CD4-positive, alpha-beta memory T cell (primary cell): ENCODE measurements at regions of chr3 and their contacts with region 1.

Region 1: GRCh38 chr3:186790261-186790981 is 7.0 kb downstream of the EIF4A2 start:
- DNase-seq: peak in 2 of 5 donors; percentile 8 to 23
- H3K4me3 ChIP-seq: no peak overlapping the region
- H3K4me3 Mint-ChIP-seq: no peak overlapping the region
- H3K27ac ChIP-seq: no peak overlapping the region
- H3K27ac Mint-ChIP-seq: peak overlapping the region; percentile 33 to 97 (median 72)
- H3K4me1 ChIP-seq: peaks cover 43% of the 10 kb centered on the region
- H3K4me1 Mint-ChIP-seq: peaks cover 35 to 45% (median 42%) of the 10 kb centered on the region in 4 donors
- H3K27me3 ChIP-seq: no peaks in the 10 kb centered on the region
- H3K27me3 Mint-ChIP-seq: no peaks in the 10 kb centered on the region

Region 2: DNA sequence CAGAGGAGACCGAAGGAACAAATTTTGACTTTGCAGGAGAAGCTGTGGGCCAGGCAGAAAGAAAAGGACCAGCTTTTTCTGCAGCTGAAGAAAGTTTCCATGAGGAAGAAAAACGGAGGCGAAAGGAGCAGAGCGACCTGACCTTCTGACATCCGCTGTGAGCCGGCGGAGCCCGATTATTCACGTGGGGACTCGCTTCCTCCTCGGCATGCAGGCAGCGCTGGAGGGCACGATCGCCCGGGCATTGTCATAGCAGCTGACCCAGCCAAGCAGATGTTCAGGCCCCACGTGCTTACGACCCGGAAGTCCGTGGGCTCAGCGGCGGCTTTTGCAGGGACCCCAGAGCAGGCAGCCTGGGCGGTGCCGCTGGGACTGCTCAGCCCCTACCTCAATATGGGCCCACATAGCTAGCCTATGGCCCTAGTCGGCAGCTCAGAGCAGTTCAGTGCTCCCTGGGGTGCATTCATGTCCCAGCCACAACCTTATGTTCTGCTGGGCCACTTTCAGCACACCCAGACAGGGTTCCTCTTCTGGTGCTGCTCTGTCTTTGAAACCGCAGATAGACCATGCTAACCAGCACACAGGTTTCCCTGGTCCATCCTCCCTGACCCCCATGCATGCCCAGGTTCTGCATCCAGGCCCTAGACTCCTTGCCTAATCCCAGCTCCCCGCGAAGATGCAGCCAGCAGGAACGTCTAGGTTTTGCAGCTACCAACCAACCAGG is 17.6 kb before region 1 on chr3:
- CTCF ChIA-PET with region 1: no interaction called
- POLR2A ChIA-PET with region 1: interaction called, 311 read pairs
- intact Hi-C with region 1: no loop called
- DNase-seq: peak; percentile 46 to 63 (median 49)
- H3K4me3 ChIP-seq: peak overlapping the region; percentile 37 to 72
- H3K4me3 Mint-ChIP-seq: peak overlapping the region; percentile 88 to 99 (median 96)
- H3K27ac ChIP-seq: peak overlapping the region; percentile 61
- H3K27ac Mint-ChIP-seq: peak overlapping the region; percentile 81 to 95 (median 95)
- H3K4me1 ChIP-seq: peaks cover 12% of the 10 kb centered on the region
- H3K4me1 Mint-ChIP-seq: peaks cover 0 to 18% (median 13%) of the 10 kb centered on the region in 4 donors
- H3K27me3 ChIP-seq: no peaks in the 10 kb centered on the region
- H3K27me3 Mint-ChIP-seq: no peaks in the 10 kb centered on the region

Region 3: GRCh38 chr3:186965141-186965879 is 174.9 kb after region 1 on chr3:
- CTCF ChIA-PET with region 1: no interaction called
- POLR2A ChIA-PET with region 1: no interaction called
- intact Hi-C with region 1: no loop called
- DNase-seq: no peak
- H3K4me3 ChIP-seq: no peak overlapping the region
- H3K4me3 Mint-ChIP-seq: no peak overlapping the region
- H3K27ac ChIP-seq: no peak overlapping the region
- H3K27ac Mint-ChIP-seq: peak overlapping the region in 6 of 7 donors; percentile 29 to 79 (median 54)
- H3K4me1 ChIP-seq: peaks cover 33% of the 10 kb centered on the region
- H3K4me1 Mint-ChIP-seq: peaks cover 37 to 77% (median 55%) of the 10 kb centered on the region in 4 donors
- H3K27me3 ChIP-seq: no peaks in the 10 kb centered on the region
- H3K27me3 Mint-ChIP-seq: no peaks in the 10 kb centered on the region

Region 4: GRCh38 chr3:187130346-187131066 is 340.1 kb after region 1 on chr3:
- CTCF ChIA-PET with region 1: no interaction called
- POLR2A ChIA-PET with region 1: no interaction called
- intact Hi-C with region 1: loop called (anchors 5 kb)
- DNase-seq: peak; percentile 74 to 86 (median 83)
- H3K4me3 ChIP-seq: peak overlapping the region in 1 of 2 donors; percentile 37
- H3K4me3 Mint-ChIP-seq: peak overlapping the region; percentile 22 to 82 (median 74)
- H3K27ac ChIP-seq: peak overlapping the region; percentile 74
- H3K27ac Mint-ChIP-seq: peak overlapping the region; percentile 93 to 99 (median 98)
- H3K4me1 ChIP-seq: peaks cover 26% of the 10 kb centered on the region
- H3K4me1 Mint-ChIP-seq: peaks cover 16 to 39% (median 27%) of the 10 kb centered on the region in 4 donors
- H3K27me3 ChIP-seq: no peaks in the 10 kb centered on the region
- H3K27me3 Mint-ChIP-seq: no peaks in the 10 kb centered on the region